CD4-positive, alpha-beta memory T cell (primary cell): ENCODE measurements at regions of chr11 and their contacts with region 1.

Region 1: GRCh38 chr11:61947486-61948210 is 2.5 kb upstream of the BEST1 start:
- DNase-seq: peak; percentile 55 to 64 (median 59)
- H3K4me3 ChIP-seq: no peak overlapping the region
- H3K4me3 Mint-ChIP-seq: no peak overlapping the region
- H3K27ac ChIP-seq: no peak overlapping the region
- H3K27ac Mint-ChIP-seq: peak overlapping the region in 2 of 7 donors; percentile 41 to 82
- H3K4me1 ChIP-seq: no peaks in the 10 kb centered on the region
- H3K4me1 Mint-ChIP-seq: no peaks in the 10 kb centered on the region
- H3K27me3 ChIP-seq: no peaks in the 10 kb centered on the region
- H3K27me3 Mint-ChIP-seq: peaks cover 0 to 3% of the 10 kb centered on the region in 2 donors

Region 2: DNA sequence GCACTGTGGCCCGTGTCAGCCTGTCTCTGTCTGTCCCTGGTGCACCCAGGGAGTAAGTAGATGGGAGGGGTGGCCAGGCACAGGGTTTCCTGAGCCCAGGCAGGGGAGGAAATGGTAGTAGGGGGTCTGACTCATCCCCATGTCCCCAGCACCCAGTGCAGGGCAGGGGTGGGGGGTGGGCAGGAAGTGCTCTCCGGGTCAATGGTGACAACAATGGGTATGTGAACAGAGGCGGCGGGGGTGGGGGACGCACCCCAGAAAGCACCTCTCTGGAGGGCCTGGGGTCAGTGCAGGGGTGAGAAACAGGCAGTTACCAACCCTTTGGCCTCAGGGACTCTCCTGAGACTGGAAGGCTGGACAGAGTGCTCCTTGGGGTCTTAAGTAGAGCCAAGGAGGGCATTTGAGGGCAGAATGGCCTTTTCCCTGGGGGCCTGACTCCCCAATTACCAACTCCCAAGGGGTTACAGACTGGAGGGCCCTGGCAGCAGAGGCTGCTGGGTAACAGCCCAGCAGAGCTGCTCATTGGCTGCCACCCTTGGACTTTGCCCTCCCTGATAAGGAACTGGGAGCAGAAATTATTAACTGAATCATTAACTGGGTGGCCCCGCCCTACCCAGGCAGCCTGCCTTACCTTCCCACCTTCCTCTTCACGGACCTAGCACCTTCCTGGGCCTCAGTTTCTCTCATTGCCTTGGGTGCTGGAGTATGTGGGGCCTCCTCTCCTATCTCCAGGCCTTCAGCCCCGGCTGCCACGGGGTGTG is 191.0 kb before region 1 on chr11:
- CTCF ChIA-PET with region 1: no interaction called
- POLR2A ChIA-PET with region 1: no interaction called
- intact Hi-C with region 1: no loop called
- DNase-seq: no peak
- H3K4me3 ChIP-seq: no peak overlapping the region
- H3K4me3 Mint-ChIP-seq: no peak overlapping the region
- H3K27ac ChIP-seq: no peak overlapping the region
- H3K27ac Mint-ChIP-seq: peak overlapping the region in 3 of 7 donors; percentile 14 to 31 (median 17)
- H3K4me1 ChIP-seq: peaks cover 16% of the 10 kb centered on the region
- H3K4me1 Mint-ChIP-seq: peaks cover 2 to 35% (median 16%) of the 10 kb centered on the region in 4 donors
- H3K27me3 ChIP-seq: no peaks in the 10 kb centered on the region
- H3K27me3 Mint-ChIP-seq: peaks cover 1 to 2% of the 10 kb centered on the region in 2 donors

Region 3: DNA sequence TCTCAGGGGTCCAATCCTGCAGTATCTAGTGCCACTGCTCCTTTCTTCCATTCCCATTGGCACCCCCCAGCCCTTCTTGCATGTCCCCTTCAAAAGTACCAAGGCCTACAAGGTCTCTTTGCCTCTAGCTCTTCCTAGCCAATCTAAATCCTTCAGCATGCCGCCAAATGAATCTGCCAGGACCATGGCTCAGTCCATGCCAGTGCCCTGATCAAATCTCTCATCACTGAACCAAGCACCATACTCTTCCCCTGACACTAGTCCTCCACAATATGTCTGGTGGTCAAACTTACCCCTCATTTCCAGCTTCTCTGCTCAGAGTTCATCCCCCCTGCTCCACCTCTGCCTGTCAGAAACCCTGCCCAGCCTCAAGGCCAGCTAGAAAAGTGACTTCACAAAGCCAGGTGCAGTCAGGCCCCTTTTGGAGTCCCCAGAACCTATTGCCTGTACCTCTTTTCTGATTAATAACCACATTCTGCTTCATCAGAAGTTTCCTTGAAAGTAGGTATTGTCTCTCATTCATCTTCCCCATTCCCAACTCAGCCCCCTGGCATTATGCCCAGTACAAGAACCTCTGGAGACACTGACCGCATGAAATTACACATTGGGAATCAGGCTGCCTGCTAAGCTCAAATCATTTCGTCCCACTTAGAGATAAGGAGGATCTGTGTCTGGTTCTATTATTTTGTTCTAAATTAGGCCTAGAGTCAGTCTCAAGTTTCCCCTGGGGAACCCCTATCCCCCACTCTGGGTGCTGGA is 143.6 kb before region 1 on chr11:
- CTCF ChIA-PET with region 1: interaction called, 96 read pairs
- POLR2A ChIA-PET with region 1: no interaction called
- intact Hi-C with region 1: no loop called
- DNase-seq: no peak
- H3K4me3 ChIP-seq: no peak overlapping the region
- H3K4me3 Mint-ChIP-seq: no peak overlapping the region
- H3K27ac ChIP-seq: no peak overlapping the region
- H3K27ac Mint-ChIP-seq: peak overlapping the region in 1 of 7 donors; percentile 24
- H3K4me1 ChIP-seq: no peaks in the 10 kb centered on the region
- H3K4me1 Mint-ChIP-seq: no peaks in the 10 kb centered on the region
- H3K27me3 ChIP-seq: no peaks in the 10 kb centered on the region
- H3K27me3 Mint-ChIP-seq: no peaks in the 10 kb centered on the region

Region 4: GRCh38 chr11:61860054-61860903 is 87.4 kb before region 1 on chr11:
- CTCF ChIA-PET with region 1: no interaction called
- POLR2A ChIA-PET with region 1: no interaction called
- intact Hi-C with region 1: no loop called
- DNase-seq: no peak
- H3K4me3 ChIP-seq: no peak overlapping the region
- H3K4me3 Mint-ChIP-seq: no peak overlapping the region
- H3K27ac ChIP-seq: no peak overlapping the region
- H3K27ac Mint-ChIP-seq: no peak overlapping the region
- H3K4me1 ChIP-seq: no peaks in the 10 kb centered on the region
- H3K4me1 Mint-ChIP-seq: no peaks in the 10 kb centered on the region
- H3K27me3 ChIP-seq: no peaks in the 10 kb centered on the region
- H3K27me3 Mint-ChIP-seq: no peaks in the 10 kb centered on the region

Region 5: DNA sequence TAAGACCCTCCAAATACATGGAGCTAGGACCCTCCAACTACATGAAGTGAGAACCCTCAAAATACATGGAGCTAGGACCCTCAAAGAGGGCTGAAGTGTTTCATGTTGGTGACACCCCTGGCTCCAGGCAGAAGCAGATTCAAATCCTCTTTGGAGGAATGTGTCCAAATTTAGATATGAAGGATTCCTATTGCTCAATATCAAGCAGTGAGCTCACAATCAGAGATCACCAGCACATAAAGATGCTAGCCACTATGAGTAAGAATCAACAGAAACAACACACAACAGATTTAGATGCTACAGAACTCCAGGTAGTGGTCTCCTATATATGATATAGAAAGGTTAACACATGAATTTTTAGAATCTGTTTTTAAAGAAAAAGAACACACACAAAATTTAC is 19.0 kb before region 1 on chr11:
- CTCF ChIA-PET with region 1: interaction called, 10 read pairs
- POLR2A ChIA-PET with region 1: no interaction called
- intact Hi-C with region 1: no loop called
- DNase-seq: no peak
- H3K4me3 ChIP-seq: no peak overlapping the region
- H3K4me3 Mint-ChIP-seq: no peak overlapping the region
- H3K27ac ChIP-seq: no peak overlapping the region
- H3K27ac Mint-ChIP-seq: peak overlapping the region in 1 of 7 donors; percentile 10
- H3K4me1 ChIP-seq: no peaks in the 10 kb centered on the region
- H3K4me1 Mint-ChIP-seq: no peaks in the 10 kb centered on the region
- H3K27me3 ChIP-seq: no peaks in the 10 kb centered on the region
- H3K27me3 Mint-ChIP-seq: peaks cover 9 to 16% of the 10 kb centered on the region in 2 donors

Region 6: DNA sequence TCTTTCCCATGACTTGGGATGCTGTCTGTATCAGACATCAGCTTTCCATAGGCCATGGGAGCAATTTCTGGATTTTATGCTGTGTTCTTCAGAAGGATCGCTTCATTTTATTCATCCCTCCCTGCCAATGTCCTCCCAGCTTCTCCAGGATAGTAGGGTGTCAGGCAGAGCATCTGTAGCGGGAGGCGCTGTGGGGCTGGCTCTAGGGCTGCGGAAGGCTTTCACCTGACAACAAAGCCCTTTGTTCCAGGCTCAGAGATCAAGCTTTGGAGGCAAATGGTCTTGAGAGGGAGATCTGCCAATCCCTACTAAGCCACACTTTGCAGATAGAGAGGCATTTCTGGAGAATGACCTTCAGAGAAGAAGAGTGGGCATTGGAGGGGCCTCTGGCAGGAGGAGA is 49.3 kb after region 1 on chr11:
- CTCF ChIA-PET with region 1: no interaction called
- POLR2A ChIA-PET with region 1: no interaction called
- intact Hi-C with region 1: no loop called
- DNase-seq: no peak
- H3K4me3 ChIP-seq: no peak overlapping the region
- H3K4me3 Mint-ChIP-seq: no peak overlapping the region
- H3K27ac ChIP-seq: no peak overlapping the region
- H3K27ac Mint-ChIP-seq: peak overlapping the region in 1 of 7 donors; percentile 30
- H3K4me1 ChIP-seq: no peaks in the 10 kb centered on the region
- H3K4me1 Mint-ChIP-seq: peaks cover 0 to 3% (median 0%) of the 10 kb centered on the region in 4 donors
- H3K27me3 ChIP-seq: no peaks in the 10 kb centered on the region
- H3K27me3 Mint-ChIP-seq: peaks cover 0 to 2% of the 10 kb centered on the region in 2 donors

Region 7: DNA sequence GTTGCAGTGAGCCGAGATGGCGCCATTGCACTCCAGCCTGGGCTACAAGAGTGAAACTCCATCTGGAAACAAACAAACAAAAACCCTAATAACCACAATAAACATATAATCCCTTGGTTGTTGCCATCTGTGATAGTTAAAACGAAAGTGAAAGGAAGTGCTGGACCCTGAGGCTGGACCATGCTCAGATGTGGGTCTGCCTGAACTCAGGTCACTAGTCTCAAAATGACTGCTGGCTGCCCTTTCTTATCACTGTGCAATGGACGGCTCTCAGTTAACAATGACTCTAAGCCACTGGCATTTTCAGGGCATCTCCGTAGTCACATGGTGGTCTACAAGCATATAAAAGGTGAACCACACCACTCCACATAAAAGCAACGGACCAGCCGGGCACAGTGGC is 68.0 kb after region 1 on chr11:
- CTCF ChIA-PET with region 1: no interaction called
- POLR2A ChIA-PET with region 1: no interaction called
- intact Hi-C with region 1: no loop called
- DNase-seq: no peak
- H3K4me3 ChIP-seq: no peak overlapping the region
- H3K4me3 Mint-ChIP-seq: no peak overlapping the region
- H3K27ac ChIP-seq: no peak overlapping the region
- H3K27ac Mint-ChIP-seq: peak overlapping the region in 2 of 7 donors; percentile 35 to 68
- H3K4me1 ChIP-seq: no peaks in the 10 kb centered on the region
- H3K4me1 Mint-ChIP-seq: peaks cover 0 to 2% (median 0%) of the 10 kb centered on the region in 4 donors
- H3K27me3 ChIP-seq: no peaks in the 10 kb centered on the region
- H3K27me3 Mint-ChIP-seq: peaks cover 0 to 4% of the 10 kb centered on the region in 2 donors